CD4-positive, alpha-beta memory T cell (primary cell): ENCODE measurements at regions of chr1 and their contacts with region 1.

Region 1: DNA sequence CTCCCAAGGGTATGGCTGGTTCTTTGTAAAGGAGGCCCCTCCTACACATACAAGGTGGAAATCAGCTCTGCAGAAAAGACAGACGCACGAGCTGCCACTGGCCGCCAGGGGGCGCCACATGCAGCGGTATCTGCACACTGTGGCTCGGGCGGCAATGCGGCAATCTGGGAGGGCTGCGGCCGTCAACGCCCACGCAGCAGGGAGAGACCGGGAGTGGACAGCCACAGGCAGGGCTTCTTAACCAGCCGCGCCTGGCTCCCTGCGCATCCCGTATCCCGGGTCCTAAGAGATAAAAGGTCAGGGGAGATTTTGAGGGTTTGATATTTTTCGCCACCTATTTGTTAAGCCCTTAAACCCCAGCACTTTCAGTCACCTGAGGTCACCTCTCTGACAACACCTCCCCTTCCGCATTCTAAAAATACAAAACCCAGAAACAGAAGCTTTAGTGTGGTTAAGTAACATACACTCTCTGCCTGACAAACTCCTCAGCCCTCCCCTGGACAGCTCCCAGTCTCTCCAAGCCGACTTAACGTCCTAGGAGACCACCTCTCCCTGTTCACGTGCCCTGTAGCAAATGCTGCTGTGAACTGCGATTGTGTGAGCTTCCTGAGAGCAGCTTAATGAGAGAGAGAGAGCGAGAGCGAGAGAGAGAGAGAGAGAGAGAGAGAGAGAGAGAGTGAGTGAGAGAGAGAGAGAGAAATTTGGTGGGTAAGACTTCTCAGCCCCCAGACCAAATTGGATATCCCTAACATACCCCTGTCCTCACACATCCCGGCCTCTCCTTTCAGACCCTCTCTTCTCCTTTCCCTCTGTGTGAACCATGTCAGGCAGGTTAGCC is 13.5 kb upstream of the KCNA2 start:
- DNase-seq: peak; percentile 86 to 92 (median 91)
- H3K4me3 ChIP-seq: peak overlapping the region; percentile 60 to 77
- H3K4me3 Mint-ChIP-seq: peak overlapping the region; percentile 86 to 97 (median 91)
- H3K27ac ChIP-seq: peak overlapping the region; percentile 50
- H3K27ac Mint-ChIP-seq: peak overlapping the region; percentile 90 to 99 (median 97)
- H3K4me1 ChIP-seq: peaks cover 33% of the 10 kb centered on the region
- H3K4me1 Mint-ChIP-seq: peaks cover 32 to 50% (median 38%) of the 10 kb centered on the region in 4 donors
- H3K27me3 ChIP-seq: no peaks in the 10 kb centered on the region
- H3K27me3 Mint-ChIP-seq: no peaks in the 10 kb centered on the region

Region 2: GRCh38 chr1:110554871-110555801 is 64.5 kb before region 1 on chr1:
- CTCF ChIA-PET with region 1: interaction called, 36 read pairs
- POLR2A ChIA-PET with region 1: no interaction called
- intact Hi-C with region 1: loop called (anchors 1 kb)
- DNase-seq: peak in 4 of 5 donors; percentile 43 to 56 (median 51)
- H3K4me3 ChIP-seq: no peak overlapping the region
- H3K4me3 Mint-ChIP-seq: peak overlapping the region in 6 of 8 donors; percentile 29 to 68 (median 50)
- H3K27ac ChIP-seq: no peak overlapping the region
- H3K27ac Mint-ChIP-seq: no peak overlapping the region
- H3K4me1 ChIP-seq: peaks cover 3% of the 10 kb centered on the region
- H3K4me1 Mint-ChIP-seq: peaks cover 2 to 9% (median 4%) of the 10 kb centered on the region in 4 donors
- H3K27me3 ChIP-seq: peaks cover 18% of the 10 kb centered on the region
- H3K27me3 Mint-ChIP-seq: peaks cover 30 to 43% of the 10 kb centered on the region in 2 donors

Region 3: DNA sequence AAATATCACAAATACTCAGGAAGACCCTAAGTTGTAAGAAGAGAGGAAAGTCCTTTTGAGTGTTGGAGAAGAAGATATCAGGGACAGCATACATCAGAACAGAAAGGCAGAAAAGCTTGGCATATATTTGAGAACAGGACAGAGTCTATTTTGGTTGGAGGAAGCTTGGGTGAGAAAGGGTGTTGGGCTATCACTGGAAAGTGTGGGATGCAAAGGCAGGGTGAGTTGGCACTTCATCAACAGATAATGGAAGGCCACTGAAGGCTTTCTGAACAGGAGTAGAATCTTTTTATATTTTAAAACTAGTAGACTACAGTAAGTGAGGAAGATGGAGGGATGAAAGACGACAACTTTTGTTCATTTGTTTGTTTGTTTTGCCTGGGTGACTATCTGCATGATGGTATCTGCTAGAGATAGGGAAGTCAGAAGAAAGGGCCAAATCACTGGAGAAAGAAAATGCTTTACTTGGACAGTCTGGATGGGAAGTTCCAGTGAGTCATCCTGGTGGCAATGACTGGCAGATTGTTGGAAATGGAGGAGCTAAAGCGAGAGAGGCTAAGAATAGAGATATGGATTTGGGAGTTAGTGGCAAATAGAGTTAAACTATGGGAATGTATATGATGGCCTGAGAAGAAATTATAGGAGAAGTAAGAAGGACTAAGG is 20.2 kb after region 1 on chr1:
- CTCF ChIA-PET with region 1: interaction called, 16 read pairs
- POLR2A ChIA-PET with region 1: interaction called, 40 read pairs
- intact Hi-C with region 1: loop called (anchors 2 kb)
- DNase-seq: no peak
- H3K4me3 ChIP-seq: no peak overlapping the region
- H3K4me3 Mint-ChIP-seq: peak overlapping the region in 6 of 8 donors; percentile 11 to 53 (median 36)
- H3K27ac ChIP-seq: no peak overlapping the region
- H3K27ac Mint-ChIP-seq: peak overlapping the region in 6 of 7 donors; percentile 66 to 94 (median 86)
- H3K4me1 ChIP-seq: peaks cover 99% of the 10 kb centered on the region
- H3K4me1 Mint-ChIP-seq: peaks cover 11 to 90% (median 81%) of the 10 kb centered on the region in 4 donors
- H3K27me3 ChIP-seq: no peaks in the 10 kb centered on the region
- H3K27me3 Mint-ChIP-seq: no peaks in the 10 kb centered on the region

Region 4: DNA sequence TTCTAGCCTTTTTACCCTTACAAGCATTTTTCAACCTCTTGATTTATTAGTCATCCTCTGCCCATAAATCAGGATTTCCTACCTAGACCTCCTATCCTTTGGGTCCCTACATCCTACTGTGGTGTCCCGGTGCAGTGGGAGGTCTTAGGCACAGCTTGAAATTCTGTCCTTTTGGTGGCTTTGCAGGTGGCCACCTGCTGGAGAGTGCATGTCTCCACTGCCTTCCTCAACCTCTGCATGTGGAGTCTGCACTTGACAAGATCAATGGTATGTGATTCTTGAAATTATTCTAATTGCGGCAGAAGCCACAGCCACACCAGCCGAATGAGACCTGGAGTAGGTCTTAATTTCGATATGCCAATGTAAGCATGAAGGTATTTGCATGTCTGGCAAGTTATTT is 66.6 kb after region 1 on chr1:
- CTCF ChIA-PET with region 1: interaction called, 18 read pairs
- POLR2A ChIA-PET with region 1: interaction called, 7 read pairs
- intact Hi-C with region 1: loop called (anchors 1 kb)
- DNase-seq: peak in 4 of 5 donors; percentile 23 to 43 (median 34)
- H3K4me3 ChIP-seq: no peak overlapping the region
- H3K4me3 Mint-ChIP-seq: no peak overlapping the region
- H3K27ac ChIP-seq: no peak overlapping the region
- H3K27ac Mint-ChIP-seq: peak overlapping the region in 2 of 7 donors; percentile 19 to 56
- H3K4me1 ChIP-seq: no peaks in the 10 kb centered on the region
- H3K4me1 Mint-ChIP-seq: peaks cover 0 to 6% (median 5%) of the 10 kb centered on the region in 4 donors
- H3K27me3 ChIP-seq: no peaks in the 10 kb centered on the region
- H3K27me3 Mint-ChIP-seq: no peaks in the 10 kb centered on the region

Region 5: DNA sequence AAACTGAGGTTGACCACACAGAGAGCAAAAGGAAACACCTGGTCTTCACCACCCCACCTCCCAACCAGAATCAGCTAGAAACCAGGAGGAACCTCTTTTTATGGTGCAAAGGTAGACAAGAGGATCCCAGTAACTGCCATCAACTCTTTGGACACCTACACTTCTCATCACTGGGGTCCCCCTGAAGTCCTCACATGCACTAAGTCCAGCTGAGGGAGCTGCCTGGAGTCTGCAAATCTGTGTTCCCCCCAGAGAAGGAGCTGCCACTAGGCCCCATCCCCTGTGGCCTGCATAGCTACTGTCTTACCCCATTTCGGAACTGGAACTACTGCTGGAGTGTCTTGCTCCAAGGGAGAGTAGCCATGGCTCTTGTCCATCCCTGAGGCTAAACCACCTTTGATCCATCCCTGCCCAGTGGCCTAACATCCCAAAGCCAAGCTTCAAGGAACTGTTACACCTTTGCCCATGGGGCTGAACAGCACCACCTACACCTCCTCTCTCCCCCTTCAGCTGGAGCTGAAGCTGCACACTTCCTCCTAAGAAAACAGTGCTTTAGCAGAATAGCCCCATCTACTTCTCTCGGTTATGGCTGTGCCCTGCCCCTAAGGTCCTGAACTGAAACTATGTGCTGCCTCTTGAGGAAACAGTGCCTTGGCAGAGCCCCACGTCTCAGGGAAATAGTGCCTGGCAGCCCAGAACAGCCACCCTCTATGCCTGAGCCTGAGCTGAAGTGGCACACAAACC is 167.9 kb after region 1 on chr1:
- CTCF ChIA-PET with region 1: interaction called, 175 read pairs
- POLR2A ChIA-PET with region 1: interaction called, 28 read pairs
- intact Hi-C with region 1: loop called (anchors 1 kb)
- DNase-seq: peak; percentile 64 to 82 (median 75)
- H3K4me3 ChIP-seq: peak overlapping the region in 1 of 2 donors; percentile 19
- H3K4me3 Mint-ChIP-seq: peak overlapping the region; percentile 78 to 88 (median 82)
- H3K27ac ChIP-seq: peak overlapping the region; percentile 34
- H3K27ac Mint-ChIP-seq: peak overlapping the region; percentile 76 to 95 (median 92)
- H3K4me1 ChIP-seq: peaks cover 65% of the 10 kb centered on the region
- H3K4me1 Mint-ChIP-seq: peaks cover 55 to 70% (median 64%) of the 10 kb centered on the region in 4 donors
- H3K27me3 ChIP-seq: no peaks in the 10 kb centered on the region
- H3K27me3 Mint-ChIP-seq: peaks cover 0 to 1% of the 10 kb centered on the region in 2 donors

Region 6: DNA sequence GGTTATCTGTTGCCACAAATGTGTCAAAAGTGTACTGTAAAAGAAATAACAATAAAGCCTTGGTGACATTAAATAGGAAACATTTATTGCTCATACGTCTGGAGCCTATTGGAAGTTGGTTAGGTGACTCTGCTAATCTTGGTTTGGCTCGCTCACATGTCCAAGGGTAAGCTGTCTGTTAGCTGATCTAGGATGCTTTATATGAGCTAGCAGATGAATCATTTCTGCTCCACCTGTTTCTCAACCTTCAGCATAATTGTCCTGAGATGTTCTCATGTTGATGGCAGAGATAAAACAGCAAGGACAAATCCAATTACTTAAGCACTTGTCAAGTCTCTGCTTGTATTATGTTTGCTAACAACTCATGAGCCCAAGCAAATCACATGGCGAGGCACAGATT is 197.3 kb after region 1 on chr1:
- CTCF ChIA-PET with region 1: no interaction called
- POLR2A ChIA-PET with region 1: no interaction called
- intact Hi-C with region 1: no loop called
- DNase-seq: no peak
- H3K4me3 ChIP-seq: no peak overlapping the region
- H3K4me3 Mint-ChIP-seq: no peak overlapping the region
- H3K27ac ChIP-seq: no peak overlapping the region
- H3K27ac Mint-ChIP-seq: peak overlapping the region in 1 of 7 donors; percentile 2
- H3K4me1 ChIP-seq: no peaks in the 10 kb centered on the region
- H3K4me1 Mint-ChIP-seq: peaks cover 0 to 6% (median 3%) of the 10 kb centered on the region in 4 donors
- H3K27me3 ChIP-seq: no peaks in the 10 kb centered on the region
- H3K27me3 Mint-ChIP-seq: peaks cover 0 to 2% of the 10 kb centered on the region in 2 donors